Activated CD4-positive, alpha-beta T cell treated with anti-CD3 and anti-CD28 coated beads for 36 hours (primary cell): ENCODE measurements at regions of chr13 and their contacts with region 1.

Region 1: DNA sequence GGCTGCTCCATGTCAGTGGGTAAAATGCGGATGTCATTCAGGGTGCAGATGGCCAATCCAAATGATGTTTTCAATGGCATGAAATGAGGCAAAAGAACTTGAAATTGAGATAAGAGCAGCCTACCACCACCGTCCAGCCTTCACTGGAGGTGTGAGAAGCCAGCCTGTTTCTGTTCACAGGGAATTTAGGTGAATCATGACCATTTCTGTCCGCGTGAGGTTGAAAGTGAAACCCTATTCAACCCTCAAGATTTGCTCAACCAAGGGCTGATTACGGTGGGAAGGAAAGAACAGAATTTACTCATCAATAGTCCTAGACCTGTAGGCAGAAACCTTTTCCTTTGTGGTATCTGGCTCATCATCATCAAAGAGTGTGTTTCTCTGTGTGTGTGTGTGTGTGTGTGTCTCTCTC is 370.7 kb downstream of the COG6 start:
- DNase-seq: peak; percentile 79
- ATAC-seq: peak; percentile 82
- H3K4me3 Mint-ChIP-seq: peak overlapping the region; percentile 25
- H3K27ac Mint-ChIP-seq: peak overlapping the region; percentile 28
- H3K4me1 Mint-ChIP-seq: peaks cover 48% of the 10 kb centered on the region
- H3K27me3 Mint-ChIP-seq: no peaks in the 10 kb centered on the region

Region 2: DNA sequence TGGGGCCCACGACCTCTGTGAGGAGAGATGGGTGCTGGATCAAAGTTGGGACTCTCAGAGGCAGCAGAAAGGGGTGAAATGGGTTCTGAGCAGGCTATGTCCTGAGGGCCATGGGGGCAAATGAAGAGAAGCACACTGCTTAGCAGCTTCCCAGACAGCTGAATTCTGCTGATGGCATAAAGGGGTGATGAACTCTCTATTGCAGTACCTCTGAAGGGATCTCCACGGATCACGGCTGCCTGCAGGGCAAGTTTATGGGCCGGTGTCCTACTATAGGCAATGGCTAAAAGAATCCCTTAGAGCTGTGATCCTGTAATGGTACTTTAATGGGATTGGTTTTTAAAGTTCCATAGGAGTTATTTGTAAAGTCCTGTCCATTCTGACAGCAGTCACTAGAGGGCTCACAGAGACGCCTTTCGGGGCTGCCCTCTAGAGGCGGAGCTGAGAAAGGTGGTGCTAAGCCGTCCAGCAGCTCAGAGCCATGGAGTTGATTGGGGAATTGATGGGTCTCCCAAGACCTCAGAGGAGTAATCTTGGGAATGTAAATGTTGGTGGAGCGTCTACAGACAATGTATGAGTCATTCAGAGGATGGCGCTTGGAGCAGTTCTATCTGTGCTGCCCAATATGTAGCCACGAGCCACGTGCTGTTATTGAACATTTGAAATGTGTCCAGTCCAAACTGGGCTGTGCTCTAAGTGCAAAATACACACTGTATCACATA is 83.5 kb before region 1 on chr13:
- CTCF ChIA-PET with region 1: interaction called, 15 read pairs
- POLR2A ChIA-PET with region 1: no interaction called
- intact Hi-C with region 1: no loop called
- DNase-seq: peak; percentile 85
- ATAC-seq: peak; percentile 98
- H3K4me3 Mint-ChIP-seq: no peak overlapping the region
- H3K27ac Mint-ChIP-seq: no peak overlapping the region
- H3K4me1 Mint-ChIP-seq: peaks cover 10% of the 10 kb centered on the region
- H3K27me3 Mint-ChIP-seq: no peaks in the 10 kb centered on the region

Region 3: GRCh38 chr13:40060296-40061007 is 34.3 kb after region 1 on chr13:
- CTCF ChIA-PET with region 1: no interaction called
- POLR2A ChIA-PET with region 1: no interaction called
- intact Hi-C with region 1: loop called (anchors 2 kb)
- DNase-seq: peak; percentile 76
- ATAC-seq: peak; percentile 89
- H3K4me3 Mint-ChIP-seq: no peak overlapping the region
- H3K27ac Mint-ChIP-seq: peak overlapping the region; percentile 22
- H3K4me1 Mint-ChIP-seq: peaks cover 45% of the 10 kb centered on the region
- H3K27me3 Mint-ChIP-seq: no peaks in the 10 kb centered on the region

Region 4: GRCh38 chr13:40190641-40191100 is 164.5 kb after region 1 on chr13:
- CTCF ChIA-PET with region 1: no interaction called
- POLR2A ChIA-PET with region 1: no interaction called
- intact Hi-C with region 1: loop called in 1 of 2 experiments (anchors 2 kb)
- DNase-seq: peak; percentile 81
- ATAC-seq: peak; percentile 43
- H3K4me3 Mint-ChIP-seq: peak overlapping the region; percentile 32
- H3K27ac Mint-ChIP-seq: peak overlapping the region; percentile 89
- H3K4me1 Mint-ChIP-seq: peaks cover 76% of the 10 kb centered on the region
- H3K27me3 Mint-ChIP-seq: no peaks in the 10 kb centered on the region

Region 5: GRCh38 chr13:40517486-40518480 is 491.6 kb after region 1 on chr13:
- CTCF ChIA-PET with region 1: no interaction called
- POLR2A ChIA-PET with region 1: no interaction called
- intact Hi-C with region 1: loop called (anchors 2 to 5 kb)
- DNase-seq: peak; percentile 54
- ATAC-seq: peak; percentile 71
- H3K4me3 Mint-ChIP-seq: peak overlapping the region; percentile 44
- H3K27ac Mint-ChIP-seq: peak overlapping the region; percentile 91
- H3K4me1 Mint-ChIP-seq: peaks cover 84% of the 10 kb centered on the region
- H3K27me3 Mint-ChIP-seq: no peaks in the 10 kb centered on the region